AG04450 (cell line): ENCODE measurements at regions of chr20 and their contacts with region 1.

Region 1: GRCh38 chr20:45971675-45972499 is at the start of gene ZNF335:
- DNase-seq: peak; percentile 93
- H3K4me3 ChIP-seq: peak within 1 kb of the TSS; percentile 97
- H3K27ac ChIP-seq: peak within 1 kb of the TSS; percentile 100
- H3K27me3 ChIP-seq: no peaks in the 10 kb centered on the region
- CTCF ChIP-seq: peak; percentile 25; the same call in 1 of the 2 replicates
- polyA plus RNA-seq, gene ZNF335: 5.5 and 7.6 TPM in 2 replicates

Region 2: DNA sequence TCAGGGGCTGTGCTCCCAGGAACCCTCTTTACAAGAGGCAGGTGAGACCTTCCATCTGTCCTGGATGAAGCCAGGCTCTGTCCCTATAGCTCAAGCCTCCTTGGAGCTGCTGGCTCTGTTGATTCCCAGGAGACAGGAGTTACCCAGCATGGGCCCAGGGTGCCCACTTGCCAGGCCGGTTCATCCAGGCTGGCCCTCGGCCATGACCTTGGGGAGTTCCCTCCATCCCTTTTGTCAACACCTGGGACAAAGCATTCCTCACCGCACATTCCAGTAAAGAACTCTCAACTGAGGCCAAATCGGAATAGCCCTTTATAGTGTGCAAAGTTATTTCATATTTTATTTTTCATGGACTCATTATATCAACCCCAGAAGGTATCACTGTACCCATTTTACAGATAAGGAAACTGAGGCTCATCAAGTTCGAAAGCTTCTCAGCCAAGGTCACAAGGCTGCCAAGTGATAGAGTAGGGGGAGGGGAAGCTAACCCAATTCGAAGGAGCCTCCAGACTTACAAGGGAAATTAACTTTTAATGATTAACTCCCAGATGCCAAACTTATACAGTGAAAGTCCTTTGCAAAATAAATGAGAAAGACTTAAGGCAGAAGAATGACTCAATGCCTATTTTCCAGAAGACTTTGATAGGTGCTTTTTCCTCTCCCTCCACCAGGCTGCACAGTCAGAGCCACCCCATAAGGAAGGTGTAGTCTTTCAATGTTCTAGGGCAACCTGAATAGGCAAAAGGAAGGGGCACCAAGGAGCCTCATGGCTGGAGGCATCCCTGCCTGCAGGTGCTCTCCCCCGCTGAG is 642.2 kb before region 1 on chr20:
- CTCF ChIA-PET with region 1: no interaction called
- POLR2A ChIA-PET with region 1: interaction called, 11 read pairs
- DNase-seq: no peak
- H3K4me3 ChIP-seq: no peak overlapping the region
- H3K27ac ChIP-seq: no peak overlapping the region
- H3K27me3 ChIP-seq: no peaks in the 10 kb centered on the region
- CTCF ChIP-seq: peak; percentile 18; the same call in 1 of the 2 replicates

Region 3: GRCh38 chr20:45833030-45833882 is 138.6 kb before region 1 on chr20 and contains the start of gene SNX21:
- CTCF ChIA-PET with region 1: interaction called, 10 read pairs
- POLR2A ChIA-PET with region 1: no interaction called
- DNase-seq: peak; percentile 83
- H3K4me3 ChIP-seq: peak within 1 kb of the TSS; percentile 83
- H3K27ac ChIP-seq: peak within 1 kb of the TSS; percentile 88
- H3K27me3 ChIP-seq: no peaks in the 10 kb centered on the region
- CTCF ChIP-seq: no peak
- polyA plus RNA-seq, gene SNX21: 9.2 and 11.5 TPM in 2 replicates

Region 4: GRCh38 chr20:45924391-45925261 is 47.3 kb before region 1 on chr20:
- CTCF ChIA-PET with region 1: interaction called, 12 read pairs
- POLR2A ChIA-PET with region 1: interaction called, 7 read pairs
- DNase-seq: no peak
- H3K4me3 ChIP-seq: no peak overlapping the region
- H3K27ac ChIP-seq: peak overlapping the region; percentile 47
- H3K27me3 ChIP-seq: no peaks in the 10 kb centered on the region
- CTCF ChIP-seq: no peak

Region 5: DNA sequence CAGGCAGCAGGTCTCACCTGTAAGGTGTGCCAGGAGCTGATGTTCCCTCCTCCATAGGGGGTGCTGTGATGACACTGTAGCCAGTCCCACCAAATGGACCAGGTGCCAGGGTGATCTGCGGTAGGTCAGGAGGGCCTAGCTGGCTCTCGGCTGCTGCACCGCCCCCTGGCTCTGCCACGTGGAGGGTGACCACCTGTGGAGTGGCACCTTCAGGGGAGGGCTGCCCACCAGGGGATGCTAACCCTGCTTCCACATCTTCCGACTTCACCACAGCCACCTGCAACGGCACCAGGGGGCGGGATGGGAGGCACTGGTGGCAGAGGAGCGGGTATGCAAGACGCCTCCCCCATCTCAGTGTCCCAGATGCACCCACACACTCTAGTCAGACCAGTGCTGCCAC is 18.2 kb before region 1 on chr20:
- CTCF ChIA-PET with region 1: interaction called, 60 read pairs
- POLR2A ChIA-PET with region 1: interaction called, 6 read pairs
- DNase-seq: no peak
- H3K4me3 ChIP-seq: no peak overlapping the region
- H3K27ac ChIP-seq: no peak overlapping the region
- H3K27me3 ChIP-seq: no peaks in the 10 kb centered on the region
- CTCF ChIP-seq: no peak

Region 6: GRCh38 chr20:46117704-46118467 is 146.0 kb after region 1 on chr20 and contains the start of gene CD40:
- CTCF ChIA-PET with region 1: no interaction called
- POLR2A ChIA-PET with region 1: no interaction called
- DNase-seq: no peak
- H3K4me3 ChIP-seq: 0 out of 2 replicates have a peak within 1 kb of the TSS, but pooled peaks have one; percentile 10
- H3K27ac ChIP-seq: no peak within 1 kb of the TSS
- H3K27me3 ChIP-seq: peaks cover 13% of the 10 kb centered on the region
- CTCF ChIP-seq: no peak
- polyA plus RNA-seq, gene CD40: 0.21 and 0.37 TPM in 2 replicates

Region 7: GRCh38 chr20:46349035-46349741 is 377.3 kb after region 1 on chr20:
- CTCF ChIA-PET with region 1: interaction called, 20 read pairs
- POLR2A ChIA-PET with region 1: no interaction called
- DNase-seq: no peak
- H3K4me3 ChIP-seq: no peak overlapping the region
- H3K27ac ChIP-seq: no peak overlapping the region
- H3K27me3 ChIP-seq: peaks cover 6% of the 10 kb centered on the region
- CTCF ChIP-seq: peak; percentile 69